Dorsolateral prefrontal cortex (tissue), 120 donors: ENCODE measurements at regions of chr1 and their contacts with region 1.

Region 1: DNA sequence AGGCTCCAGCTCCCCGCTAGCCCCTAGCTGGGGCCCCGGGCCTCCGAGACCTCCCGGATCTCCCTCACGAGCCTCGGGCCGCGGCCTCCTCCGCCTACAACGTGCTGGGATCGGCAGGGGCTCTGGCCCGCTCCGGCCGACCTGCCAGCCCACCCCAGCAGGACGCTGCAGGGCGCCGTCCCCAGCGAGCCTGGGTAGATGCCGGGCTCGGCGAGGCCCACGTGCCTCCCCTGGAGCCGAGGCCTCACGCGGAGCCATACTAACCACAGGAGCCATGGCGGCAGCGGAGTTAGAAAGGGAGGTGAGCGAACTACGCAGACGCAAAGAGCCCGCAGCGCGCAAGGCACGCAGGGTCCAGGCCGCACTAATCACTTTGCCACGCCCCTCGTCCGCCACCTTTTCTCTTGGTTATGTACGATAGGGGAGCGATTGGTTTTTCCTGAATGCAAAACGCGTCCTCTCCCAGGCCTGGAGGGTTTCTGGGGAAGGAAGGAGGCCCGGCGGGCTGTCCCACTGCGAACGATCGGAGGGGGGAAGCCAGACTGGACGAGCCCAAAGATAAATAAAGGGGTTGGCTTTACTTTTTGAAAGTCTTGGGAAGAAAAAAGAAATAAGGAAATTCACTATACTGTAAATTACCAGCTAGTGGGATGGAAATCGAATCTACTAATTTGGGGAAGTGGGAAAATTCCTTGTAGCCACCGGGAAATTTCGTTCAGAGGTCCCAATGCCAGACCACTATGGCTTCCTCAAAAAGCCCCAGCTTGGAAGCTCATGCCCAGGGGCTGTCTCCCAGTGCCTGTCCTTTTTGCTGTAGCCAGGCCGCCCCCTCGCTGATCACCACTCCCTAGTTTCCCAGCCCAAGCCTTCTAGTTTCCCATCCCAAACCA is at the start of gene RPL22:
- DNase-seq: peak; percentile 95 to 99 (median 97)
- H3K4me3 ChIP-seq: peak within 1 kb of the TSS; percentile 73 to 100 (median 97)
- H3K27ac ChIP-seq: peak within 1 kb of the TSS in 57 of 59 donors; percentile 40 to 94 (median 82)
- H3K27me3 ChIP-seq: peaks cover 0 to 11% (median 0%) of the 10 kb centered on the region in 45 donors
- CTCF ChIP-seq: peak in 41 of 56 donors; percentile 8 to 65 (median 37)
- total RNA-seq, gene RPL22: 111 to 227 (median 176) TPM

Region 2: DNA sequence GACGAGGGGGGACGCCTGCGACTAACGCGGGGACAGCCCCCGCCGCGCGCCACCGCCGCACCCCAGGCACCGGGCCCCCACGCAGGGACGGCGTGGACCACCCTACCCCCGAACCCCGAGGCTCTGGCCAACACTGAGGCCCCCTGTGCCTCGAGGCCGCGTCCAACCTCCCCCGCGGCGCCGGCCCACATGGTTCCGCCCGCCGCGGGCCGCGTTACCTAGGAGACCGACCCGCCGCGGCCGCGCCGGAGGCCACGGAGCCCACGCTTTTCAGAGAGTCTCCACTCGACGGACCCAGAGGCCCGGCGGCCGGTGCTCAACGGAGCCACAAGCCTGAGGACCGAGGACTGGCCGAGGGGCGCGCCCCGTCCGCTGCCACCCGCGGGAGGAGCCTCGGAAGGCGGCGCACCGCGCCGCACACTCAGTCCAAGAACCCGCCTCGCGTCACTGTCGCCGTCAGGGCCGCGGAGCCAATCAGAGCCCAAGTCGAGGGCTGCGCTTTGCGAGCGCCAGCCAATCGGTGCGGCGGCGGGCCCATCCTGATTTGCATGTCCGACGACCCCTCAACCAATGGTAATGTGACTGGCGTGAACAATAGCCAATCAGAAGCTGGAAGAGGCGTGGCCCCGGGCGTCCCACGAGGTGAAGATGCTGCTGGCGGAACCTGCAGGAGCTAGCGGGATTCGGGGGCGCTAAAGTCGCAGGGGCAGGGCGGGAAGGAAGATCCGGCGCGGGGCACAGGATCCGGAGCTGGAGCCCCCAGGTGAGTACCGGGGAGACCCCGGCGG is 207.3 kb before region 1 on chr1 and contains the start of gene NPHP4:
- intact Hi-C with region 1: loop called (anchors 2 to 10 kb)
- DNase-seq: peak; percentile 100
- H3K4me3 ChIP-seq: peak within 1 kb of the TSS; percentile 61 to 98 (median 90)
- H3K27ac ChIP-seq: peak within 1 kb of the TSS in 57 of 59 donors; percentile 7 to 93 (median 85)
- H3K27me3 ChIP-seq: no peaks in the 10 kb centered on the region
- CTCF ChIP-seq: peak in 33 of 56 donors; percentile 7 to 64 (median 27)
- total RNA-seq, gene NPHP4: 19.7 to 55.4 (median 34.0) TPM

Region 3: GRCh38 chr1:6701437-6702153 is 502.1 kb after region 1 on chr1 and contains the start of gene DNAJC11:
- intact Hi-C with region 1: loop called in 1 of 2 experiments (anchors 5 kb)
- DNase-seq: peak; percentile 80 to 94 (median 88)
- H3K4me3 ChIP-seq: peak within 1 kb of the TSS; percentile 67 to 100 (median 98)
- H3K27ac ChIP-seq: peak within 1 kb of the TSS in 57 of 59 donors; percentile 41 to 92 (median 79)
- H3K27me3 ChIP-seq: no peaks in the 10 kb centered on the region
- CTCF ChIP-seq: peak; percentile 39 to 100 (median 86)
- total RNA-seq, gene DNAJC11: 42.4 to 78.3 (median 59.8) TPM